ENCODE measurements at regions of chr9 and their contacts with region 1.

Region 1: GRCh38 chr9:16039218-16039987 is 486.6 kb downstream of the CCDC171 start:
- DNase-seq: peak; percentile 49
- ATAC-seq: peak; percentile 44
- H3K4me3 Mint-ChIP-seq: no peak overlapping the region
- H3K27ac Mint-ChIP-seq: no peak overlapping the region
- H3K4me1 Mint-ChIP-seq: no peaks in the 10 kb centered on the region
- H3K27me3 Mint-ChIP-seq: no peaks in the 10 kb centered on the region

Region 2: GRCh38 chr9:15936306-15936921 is 103.0 kb before region 1 on chr9:
- CTCF ChIA-PET with region 1: no interaction called
- POLR2A ChIA-PET with region 1: no interaction called
- intact Hi-C with region 1: no loop called
- DNase-seq: no peak
- ATAC-seq: no peak
- H3K4me3 Mint-ChIP-seq: no peak overlapping the region
- H3K27ac Mint-ChIP-seq: no peak overlapping the region
- H3K4me1 Mint-ChIP-seq: no peaks in the 10 kb centered on the region
- H3K27me3 Mint-ChIP-seq: no peaks in the 10 kb centered on the region

Region 3: GRCh38 chr9:15977438-15977837 is 62.0 kb before region 1 on chr9:
- CTCF ChIA-PET with region 1: no interaction called
- POLR2A ChIA-PET with region 1: no interaction called
- intact Hi-C with region 1: no loop called
- DNase-seq: no peak
- ATAC-seq: no peak
- H3K4me3 Mint-ChIP-seq: no peak overlapping the region
- H3K27ac Mint-ChIP-seq: no peak overlapping the region
- H3K4me1 Mint-ChIP-seq: no peaks in the 10 kb centered on the region
- H3K27me3 Mint-ChIP-seq: peaks cover 2% of the 10 kb centered on the region

Region 4: GRCh38 chr9:16082796-16083195 is 43.4 kb after region 1 on chr9:
- CTCF ChIA-PET with region 1: no interaction called
- POLR2A ChIA-PET with region 1: no interaction called
- intact Hi-C with region 1: loop called in 1 of 2 experiments (anchors 5 kb)
- DNase-seq: no peak
- ATAC-seq: no peak
- H3K4me3 Mint-ChIP-seq: no peak overlapping the region
- H3K27ac Mint-ChIP-seq: no peak overlapping the region
- H3K4me1 Mint-ChIP-seq: no peaks in the 10 kb centered on the region
- H3K27me3 Mint-ChIP-seq: no peaks in the 10 kb centered on the region

Region 5: DNA sequence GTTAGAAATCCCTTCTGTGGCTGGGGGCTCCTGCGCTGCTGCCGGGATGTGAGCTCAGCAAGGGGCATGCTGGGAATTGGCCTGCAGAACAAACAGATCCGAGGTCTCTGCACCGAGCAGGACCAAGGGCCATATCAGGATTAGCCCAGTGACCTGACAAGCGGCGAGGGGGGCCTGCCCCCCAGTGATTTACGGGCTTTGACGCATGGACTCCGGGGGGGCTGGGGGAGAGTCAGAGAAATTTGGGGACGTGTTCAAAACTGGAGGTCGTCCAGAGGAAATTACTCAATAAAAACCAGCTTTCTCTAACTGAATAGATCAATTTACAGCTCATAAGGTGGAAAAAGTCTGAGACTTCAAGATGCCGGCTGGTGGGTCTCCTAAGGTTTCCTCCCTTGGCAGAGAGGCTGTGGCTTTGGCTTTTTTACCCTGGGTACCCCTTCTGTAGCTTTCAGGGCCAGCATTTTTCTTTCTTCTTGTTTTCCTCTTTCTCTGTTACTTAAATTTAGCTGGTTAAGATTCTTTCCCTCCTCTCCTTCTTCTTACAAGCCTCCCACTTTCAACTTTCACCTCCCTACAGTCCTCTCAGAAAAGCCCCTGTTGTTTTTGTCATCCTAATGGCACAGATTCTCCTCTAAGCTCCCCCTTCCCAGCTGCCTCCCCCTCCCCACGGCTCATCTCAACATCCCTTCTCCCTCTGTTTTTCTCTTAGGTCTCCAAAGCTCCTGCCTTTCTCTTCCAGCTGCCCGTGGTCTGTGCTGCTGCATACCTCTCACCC is 64.4 kb after region 1 on chr9:
- CTCF ChIA-PET with region 1: no interaction called
- POLR2A ChIA-PET with region 1: no interaction called
- intact Hi-C with region 1: no loop called
- DNase-seq: no peak
- ATAC-seq: no peak
- H3K4me3 Mint-ChIP-seq: no peak overlapping the region
- H3K27ac Mint-ChIP-seq: no peak overlapping the region
- H3K4me1 Mint-ChIP-seq: no peaks in the 10 kb centered on the region
- H3K27me3 Mint-ChIP-seq: no peaks in the 10 kb centered on the region

Measured in activated CD4-positive, alpha-beta T cell treated with anti-CD3 and anti-CD28 coated beads for 36 hours (primary cell).